ENCODE measurements at regions of chr1 and their contacts with region 1.

Region 1: DNA sequence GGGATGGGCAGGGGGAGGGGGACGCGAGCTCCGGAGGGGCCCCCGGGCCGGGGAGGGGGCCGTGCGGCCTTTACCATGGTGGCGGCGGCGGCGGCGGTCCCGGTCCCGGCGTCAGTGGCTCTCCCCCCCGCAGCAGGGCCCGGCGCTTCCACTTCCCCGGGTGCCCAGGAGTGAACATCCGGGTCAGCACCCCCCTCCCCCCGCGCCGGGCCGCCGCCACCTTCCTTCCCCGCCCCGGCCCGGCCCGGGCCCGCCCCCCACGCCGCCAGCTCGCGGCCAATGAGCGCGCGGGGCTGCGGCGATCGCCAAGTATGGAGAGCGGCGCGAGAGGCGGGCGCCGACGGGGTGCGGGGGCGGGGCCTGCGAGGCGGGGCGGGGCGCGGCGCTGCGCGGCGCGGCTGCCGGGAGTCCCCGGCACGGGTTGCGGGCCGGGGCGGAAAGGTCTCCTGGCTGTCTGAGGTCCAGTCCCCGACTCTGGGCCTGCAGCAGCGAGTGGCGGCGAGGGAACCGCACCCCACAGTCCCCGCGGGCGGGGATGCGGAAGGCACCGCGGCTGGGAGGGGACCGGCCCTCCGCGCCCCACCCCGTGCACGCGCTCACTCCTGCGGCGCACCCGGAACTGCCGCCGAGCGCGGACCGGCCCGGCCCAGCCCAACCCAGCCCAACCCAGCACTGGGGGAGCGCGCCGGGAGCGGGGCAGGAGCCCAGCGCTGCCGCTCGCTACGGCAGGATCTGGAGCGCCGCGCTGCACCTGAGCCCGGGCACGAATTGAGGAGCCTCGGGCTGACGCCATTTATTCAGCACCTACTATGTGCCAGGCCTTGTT is at the start of gene CAPZB:
- DNase-seq: peak; percentile 92 to 93
- H3K4me3 ChIP-seq: peak within 1 kb of the TSS; percentile 99 to 100 (median 100)
- H3K27ac ChIP-seq: peak within 1 kb of the TSS; percentile 99 to 100
- H3K4me1 ChIP-seq: peaks cover 0 to 24% of the 10 kb centered on the region in 2 donors
- H3K27me3 ChIP-seq: no peaks in the 10 kb centered on the region
- CTCF ChIP-seq: no peak
- POLR2A ChIP-seq: peak; percentile 47
- total RNA-seq, gene CAPZB: 112 to 114 (median 113) TPM

Region 2: DNA sequence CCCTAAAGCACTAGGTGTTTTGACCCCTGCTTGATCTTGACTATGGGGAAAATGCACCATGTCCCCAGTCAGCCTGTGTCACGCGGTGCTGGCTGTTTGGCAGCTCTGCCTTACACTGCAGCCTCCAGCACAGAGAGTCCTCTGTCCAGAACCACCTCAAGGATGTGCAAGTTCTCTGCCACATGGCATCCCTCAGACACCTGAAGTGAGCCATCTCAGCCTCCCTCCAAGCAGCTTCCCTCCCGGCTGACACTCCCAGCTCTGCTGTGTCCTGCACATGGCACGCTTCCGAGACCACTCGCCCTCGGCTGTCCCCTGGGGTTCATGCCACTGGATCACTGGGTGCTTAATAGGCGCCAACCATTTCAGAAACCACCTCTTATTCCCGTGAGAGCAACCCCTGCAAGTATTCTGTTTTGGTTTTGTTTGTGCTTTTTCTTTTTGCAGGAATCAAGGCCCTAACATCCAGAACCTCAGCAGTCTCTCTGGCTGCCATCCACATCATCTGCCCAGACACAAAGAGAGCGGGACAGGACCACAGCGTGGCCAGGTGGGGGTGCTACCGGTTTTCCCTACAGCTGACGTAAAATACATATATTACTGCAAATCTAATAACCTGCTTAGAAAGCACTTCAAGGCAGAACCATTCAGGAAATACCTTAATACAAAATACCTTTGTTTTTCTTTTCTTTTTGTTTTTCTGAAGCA is 46.0 kb before region 1 on chr1:
- intact Hi-C with region 1: loop called (anchors 10 kb)
- DNase-seq: peak in 1 of 2 donors; percentile 56
- H3K4me3 ChIP-seq: no peak overlapping the region
- H3K27ac ChIP-seq: peak overlapping the region; percentile 88 to 95
- H3K4me1 ChIP-seq: peaks cover 45 to 51% of the 10 kb centered on the region in 2 donors
- H3K27me3 ChIP-seq: no peaks in the 10 kb centered on the region
- CTCF ChIP-seq: no peak
- POLR2A ChIP-seq: no peak